Astrocyte of the cerebellum (primary cell): ENCODE measurements at regions of chr11 and their contacts with region 1.

Region 1: DNA sequence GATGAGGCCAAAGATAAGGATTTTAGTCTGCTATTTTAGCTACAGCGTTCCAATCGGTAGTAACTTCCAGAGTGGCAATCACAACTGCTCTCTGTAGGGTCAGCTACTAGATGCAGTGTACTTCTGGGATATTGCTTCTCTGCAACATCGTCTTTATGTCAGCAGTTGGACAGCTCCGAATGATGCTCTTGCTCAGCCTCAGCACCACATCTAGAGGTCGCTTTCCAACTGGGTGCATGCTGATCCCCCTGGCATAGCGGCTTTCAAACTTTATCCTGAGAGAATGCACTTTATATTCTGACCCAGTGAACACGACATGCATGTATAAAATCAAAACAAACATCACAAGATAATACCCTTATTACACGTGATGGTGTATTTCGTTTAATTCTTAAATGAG is 219.6 kb downstream of the C11orf87 start:
- DNase-seq: peak; percentile 51
- H3K4me3 ChIP-seq: no peak overlapping the region
- CTCF ChIP-seq: peak; percentile 34

Region 2: DNA sequence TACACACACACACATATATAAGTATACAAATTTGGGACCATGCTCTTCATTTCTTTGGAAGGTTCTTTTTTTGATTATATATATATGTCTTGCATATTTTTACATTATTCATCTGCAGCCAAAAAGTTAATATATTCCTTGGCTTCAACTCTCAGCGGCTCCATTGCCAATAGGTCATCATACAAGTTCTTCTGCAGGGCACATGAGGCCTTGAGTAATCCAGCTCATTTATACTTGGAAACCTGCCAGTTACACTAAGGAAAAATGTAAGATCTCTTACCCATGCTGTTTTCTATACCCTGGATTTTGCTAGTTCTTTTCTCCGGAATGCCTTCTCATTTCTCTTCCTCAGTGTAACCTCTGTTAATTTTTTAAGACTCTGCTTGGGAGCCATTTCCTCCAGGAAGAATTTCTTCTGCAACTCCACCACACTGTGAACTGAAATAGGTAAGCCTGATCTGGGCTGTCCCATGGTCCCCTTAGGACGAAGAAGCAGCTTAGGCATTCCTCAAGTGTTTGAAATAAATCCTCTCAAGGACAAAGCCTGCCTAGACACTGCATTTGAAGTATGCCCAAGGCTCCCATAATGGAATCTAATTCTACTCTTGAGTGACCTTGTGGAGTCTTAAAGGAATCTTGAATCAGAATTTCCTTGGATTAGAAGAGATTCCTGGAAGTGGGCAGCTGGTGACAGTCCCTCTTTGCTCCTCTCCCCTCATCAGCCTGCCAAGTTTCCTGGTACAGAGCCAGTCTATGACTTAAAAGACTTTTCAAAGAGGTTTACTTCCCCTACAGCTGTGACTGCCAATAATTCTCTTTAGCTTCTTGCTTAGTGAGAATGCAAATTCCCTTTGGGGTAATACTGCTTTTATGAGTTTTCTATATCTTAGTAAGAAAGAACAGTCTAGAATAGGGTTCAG is 36.8 kb before region 1 on chr11:
- in situ Hi-C with region 1: loop called (anchors 5 kb)
- DNase-seq: peak; percentile 22
- H3K4me3 ChIP-seq: no peak overlapping the region
- CTCF ChIP-seq: no peak